A673 (cell line): ENCODE measurements at regions of chr5 and their contacts with region 1.

Region 1: GRCh38 chr5:139246394-139246793 is 47.1 kb upstream of the MATR3 start:
- DNase-seq: peak; percentile 81
- H3K4me3 ChIP-seq: no peak overlapping the region
- H3K27ac ChIP-seq: peak overlapping the region; percentile 15
- H3K4me1 ChIP-seq: peaks cover 19% of the 10 kb centered on the region
- H3K27me3 ChIP-seq: no peaks in the 10 kb centered on the region
- CTCF ChIP-seq: no peak

Region 2: GRCh38 chr5:139075066-139076050 is 171.0 kb before region 1 on chr5:
- CTCF ChIA-PET with region 1: no interaction called
- POLR2A ChIA-PET with region 1: interaction called, 10 read pairs
- intact Hi-C with region 1: no loop called
- DNase-seq: no peak
- H3K4me3 ChIP-seq: no peak overlapping the region
- H3K27ac ChIP-seq: no peak overlapping the region
- H3K4me1 ChIP-seq: no peaks in the 10 kb centered on the region
- H3K27me3 ChIP-seq: no peaks in the 10 kb centered on the region
- CTCF ChIP-seq: no peak

Region 3: DNA sequence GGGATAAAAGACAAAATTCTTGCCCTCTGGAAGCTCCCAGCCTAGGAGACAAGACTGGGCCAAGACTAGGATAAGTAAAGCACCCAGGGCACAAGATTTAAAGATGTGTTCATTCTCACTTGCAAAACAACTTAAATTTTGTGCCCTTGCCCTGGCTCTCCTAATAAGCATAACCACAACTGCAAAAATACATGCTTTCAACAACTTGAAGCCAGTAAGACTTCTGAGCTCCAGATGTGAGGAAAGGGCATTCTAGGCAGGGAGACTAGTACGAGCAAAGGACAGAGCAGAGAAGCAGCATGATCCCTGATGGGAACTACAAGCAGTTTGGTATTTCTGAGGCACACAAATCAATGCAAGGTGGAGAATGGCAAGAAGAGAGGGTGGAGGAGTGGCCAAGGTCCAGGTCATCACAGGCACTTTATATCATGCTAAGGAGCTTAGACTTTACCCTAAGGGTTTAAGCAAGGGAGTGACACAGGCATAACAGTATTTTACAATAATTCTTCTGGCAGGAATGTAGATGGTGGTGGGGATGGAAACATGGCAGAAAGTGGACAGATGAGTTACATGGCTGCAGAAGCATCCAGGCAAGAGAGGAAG is 18.1 kb before region 1 on chr5:
- CTCF ChIA-PET with region 1: interaction called, 14 read pairs
- POLR2A ChIA-PET with region 1: no interaction called
- intact Hi-C with region 1: no loop called
- DNase-seq: no peak
- H3K4me3 ChIP-seq: no peak overlapping the region
- H3K27ac ChIP-seq: no peak overlapping the region
- H3K4me1 ChIP-seq: no peaks in the 10 kb centered on the region
- H3K27me3 ChIP-seq: no peaks in the 10 kb centered on the region
- CTCF ChIP-seq: no peak